Ascending aorta (tissue), 2 donors: ENCODE measurements at regions of chr20 and their contacts with region 1.

Region 1: GRCh38 chr20:35619196-35620095 is 3.8 kb downstream of the SPAG4 start:
- DNase-seq: peak in 1 of 2 donors; percentile 87
- H3K4me3 ChIP-seq: peak overlapping the region; percentile 60 to 61
- H3K27ac ChIP-seq: peak overlapping the region; percentile 71 to 75
- H3K4me1 ChIP-seq: peaks cover 5 to 16% of the 10 kb centered on the region in 2 donors
- H3K27me3 ChIP-seq: no peaks in the 10 kb centered on the region
- CTCF ChIP-seq: peak in 2 of 3 experiments; percentile 12 to 31

Region 2: GRCh38 chr20:35601008-35601973 is 18.2 kb before region 1 on chr20:
- intact Hi-C with region 1: loop called (anchors 1 kb)
- DNase-seq: peak in 1 of 2 donors; percentile 84
- H3K4me3 ChIP-seq: peak overlapping the region; percentile 66 to 71
- H3K27ac ChIP-seq: no peak overlapping the region
- H3K4me1 ChIP-seq: peaks cover 10 to 14% of the 10 kb centered on the region in 2 donors
- H3K27me3 ChIP-seq: no peaks in the 10 kb centered on the region
- CTCF ChIP-seq: peak; percentile 28 to 69 (median 30)

Region 3: DNA sequence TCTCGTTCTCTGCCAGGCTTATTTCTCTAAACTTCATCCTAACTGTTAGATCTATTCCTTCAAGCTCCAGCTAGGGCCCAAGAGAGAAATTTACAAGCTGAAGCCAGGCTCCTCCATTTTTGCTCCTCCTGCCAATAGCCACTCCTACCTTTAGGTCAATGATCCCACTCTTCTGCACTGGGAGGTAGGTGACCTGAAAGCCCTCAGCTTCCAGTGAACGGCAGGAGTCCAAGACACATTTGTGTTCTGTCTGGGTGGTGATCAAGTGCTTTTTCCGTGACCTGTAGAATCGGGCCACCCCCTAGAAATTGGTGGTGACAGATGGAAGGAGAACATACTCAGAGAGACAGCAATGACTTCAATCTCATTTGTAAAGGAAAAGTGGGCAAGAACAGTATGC is 70.8 kb after region 1 on chr20:
- intact Hi-C with region 1: no loop called
- DNase-seq: no peak
- H3K4me3 ChIP-seq: no peak overlapping the region
- H3K27ac ChIP-seq: no peak overlapping the region
- H3K4me1 ChIP-seq: no peaks in the 10 kb centered on the region
- H3K27me3 ChIP-seq: no peaks in the 10 kb centered on the region
- CTCF ChIP-seq: no peak

Region 4: DNA sequence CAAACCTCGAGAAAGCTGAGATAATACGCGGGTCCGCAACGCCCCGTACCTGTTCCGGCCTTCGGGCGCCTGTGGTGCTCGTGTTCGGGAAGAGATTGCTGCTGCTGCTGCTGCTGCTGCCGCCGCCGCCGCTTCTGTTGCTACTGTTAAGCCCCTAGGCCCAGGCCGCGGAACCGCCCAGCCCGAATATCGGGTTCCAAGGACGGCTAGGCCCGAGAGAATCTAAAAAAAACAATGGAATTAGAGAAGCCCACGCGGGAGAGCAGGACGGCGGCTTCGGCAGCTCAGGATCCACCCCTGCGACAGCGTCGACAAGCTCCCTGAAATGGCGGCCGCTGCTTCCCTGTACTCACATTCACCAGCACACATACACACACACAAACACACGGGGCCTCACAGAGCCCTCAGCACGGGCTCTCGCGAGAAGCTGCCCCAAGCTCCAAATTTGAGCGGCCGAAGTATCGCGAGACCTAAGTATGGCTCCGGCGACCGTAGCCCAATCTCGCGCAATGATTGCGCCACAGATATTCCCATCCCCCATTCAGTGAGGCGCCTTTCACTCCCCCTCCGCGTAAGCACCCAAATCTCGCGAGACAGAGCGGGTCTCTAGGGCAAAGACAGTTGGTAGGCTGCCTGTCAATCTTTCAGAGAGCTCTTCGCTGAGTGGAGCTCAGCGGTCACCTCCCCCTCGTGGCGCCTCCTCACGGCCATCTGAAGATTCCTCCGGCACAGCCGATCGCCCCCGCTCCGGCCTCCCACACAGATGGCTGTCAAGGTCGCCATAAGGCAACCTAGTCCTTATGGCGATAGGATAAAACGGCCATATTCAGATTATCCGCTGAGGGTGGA is 122.7 kb after region 1 on chr20 and contains the start of gene RBM39:
- intact Hi-C with region 1: loop called (anchors 1 kb)
- DNase-seq: peak; percentile 98 to 100
- H3K4me3 ChIP-seq: peak within 1 kb of the TSS; percentile 84 to 86
- H3K27ac ChIP-seq: peak within 1 kb of the TSS; percentile 99 to 100
- H3K4me1 ChIP-seq: peaks cover 10 to 28% of the 10 kb centered on the region in 2 donors
- H3K27me3 ChIP-seq: no peaks in the 10 kb centered on the region
- CTCF ChIP-seq: peak; percentile 22 to 50 (median 42)
- total RNA-seq, gene RBM39: 232 TPM

Region 5: GRCh38 chr20:35883778-35884540 is 264.5 kb after region 1 on chr20:
- intact Hi-C with region 1: loop called (anchors 2 kb)
- DNase-seq: peak; percentile 56 to 97
- H3K4me3 ChIP-seq: peak overlapping the region in 1 of 2 donors; percentile 39
- H3K27ac ChIP-seq: peak overlapping the region; percentile 89 to 97
- H3K4me1 ChIP-seq: peaks cover 0 to 7% of the 10 kb centered on the region in 2 donors
- H3K27me3 ChIP-seq: no peaks in the 10 kb centered on the region
- CTCF ChIP-seq: peak; percentile 68 to 82 (median 82)